ENCODE measurements at regions of chr12 and their contacts with region 1.

Region 1: GRCh38 chr12:4269279-4269991 is 4.1 kb upstream of the CCND2 start:
- DNase-seq: peak; percentile 88
- ATAC-seq: peak; percentile 22

Region 2: GRCh38 chr12:4118017-4118510 is 151.4 kb before region 1 on chr12:
- intact Hi-C with region 1: loop called (anchors 10 kb)
- DNase-seq: peak; percentile 70
- ATAC-seq: peak; percentile 82

Region 3: GRCh38 chr12:4307593-4308333 is 38.3 kb after region 1 on chr12:
- intact Hi-C with region 1: no loop called
- DNase-seq: peak; percentile 65
- ATAC-seq: peak; percentile 82

Measured in left ventricle myocardium superior (tissue), 1 donor.